ENCODE measurements at regions of chr1 and their contacts with region 1.

Region 1: DNA sequence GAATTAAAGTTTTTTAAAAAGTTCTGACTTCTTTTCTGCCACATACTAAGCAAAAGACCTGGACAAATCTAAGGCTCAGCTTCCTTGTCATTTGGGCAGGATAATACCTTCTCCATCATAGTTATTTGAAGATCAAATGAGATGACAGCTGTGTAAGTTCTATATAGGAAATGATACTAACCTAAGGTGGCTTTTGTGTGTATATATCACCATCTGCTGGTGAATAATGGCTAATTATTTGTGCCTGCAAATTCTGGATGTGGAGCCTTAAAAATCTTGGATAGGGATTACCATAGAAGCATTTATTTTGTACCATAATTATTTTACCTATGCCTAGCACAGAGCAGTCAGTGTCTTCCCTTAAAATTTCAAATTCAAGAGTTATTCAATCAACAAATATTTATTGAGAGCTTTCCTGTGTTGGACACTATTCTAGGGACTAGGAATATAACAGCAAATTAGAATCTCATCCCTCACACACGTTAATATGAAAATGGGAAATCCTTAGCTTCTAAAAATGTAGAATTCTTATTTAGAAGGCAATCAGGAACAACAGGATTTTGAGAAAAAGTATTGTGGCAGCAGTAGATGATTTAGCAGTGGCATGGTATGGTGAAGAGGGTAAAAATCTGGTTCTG is 89.8 kb downstream of the TMEM200B start:
- DNase-seq: no peak
- H3K4me3 ChIP-seq: no peak overlapping the region
- H3K27me3 ChIP-seq: no peaks in the 10 kb centered on the region
- CTCF ChIP-seq: peak; percentile 54

Region 2: GRCh38 chr1:28886731-28887418 is 147.1 kb before region 1 on chr1:
- CTCF ChIA-PET with region 1: interaction called, 369 read pairs
- POLR2A ChIA-PET with region 1: no interaction called
- DNase-seq: no peak
- H3K4me3 ChIP-seq: peak overlapping the region; percentile 82
- H3K27me3 ChIP-seq: no peaks in the 10 kb centered on the region
- CTCF ChIP-seq: no peak

Region 3: GRCh38 chr1:29022620-29023019 is 11.3 kb before region 1 on chr1:
- CTCF ChIA-PET with region 1: interaction called, 35 read pairs
- POLR2A ChIA-PET with region 1: no interaction called
- DNase-seq: no peak
- H3K4me3 ChIP-seq: no peak overlapping the region
- H3K27me3 ChIP-seq: no peaks in the 10 kb centered on the region
- CTCF ChIP-seq: no peak

Region 4: GRCh38 chr1:29050166-29050565 is 16.2 kb after region 1 on chr1:
- CTCF ChIA-PET with region 1: interaction called, 10 read pairs
- POLR2A ChIA-PET with region 1: no interaction called
- DNase-seq: no peak
- H3K4me3 ChIP-seq: no peak overlapping the region
- H3K27me3 ChIP-seq: no peaks in the 10 kb centered on the region
- CTCF ChIP-seq: no peak

Region 5: GRCh38 chr1:29124366-29125236 is 90.7 kb after region 1 on chr1:
- CTCF ChIA-PET with region 1: interaction called, 10 read pairs
- POLR2A ChIA-PET with region 1: no interaction called
- DNase-seq: no peak
- H3K4me3 ChIP-seq: peak overlapping the region; percentile 79
- H3K27me3 ChIP-seq: 0 out of 2 replicates have a peak, but pooled peaks cover 2% of the 10 kb centered on the region
- CTCF ChIP-seq: peak; percentile 69

Region 6: GRCh38 chr1:29197585-29197924 is 163.6 kb after region 1 on chr1:
- CTCF ChIA-PET with region 1: interaction called, 20 read pairs
- POLR2A ChIA-PET with region 1: no interaction called
- DNase-seq: no peak
- H3K4me3 ChIP-seq: no peak overlapping the region
- H3K27me3 ChIP-seq: no peaks in the 10 kb centered on the region
- CTCF ChIP-seq: peak; percentile 60

Region 7: DNA sequence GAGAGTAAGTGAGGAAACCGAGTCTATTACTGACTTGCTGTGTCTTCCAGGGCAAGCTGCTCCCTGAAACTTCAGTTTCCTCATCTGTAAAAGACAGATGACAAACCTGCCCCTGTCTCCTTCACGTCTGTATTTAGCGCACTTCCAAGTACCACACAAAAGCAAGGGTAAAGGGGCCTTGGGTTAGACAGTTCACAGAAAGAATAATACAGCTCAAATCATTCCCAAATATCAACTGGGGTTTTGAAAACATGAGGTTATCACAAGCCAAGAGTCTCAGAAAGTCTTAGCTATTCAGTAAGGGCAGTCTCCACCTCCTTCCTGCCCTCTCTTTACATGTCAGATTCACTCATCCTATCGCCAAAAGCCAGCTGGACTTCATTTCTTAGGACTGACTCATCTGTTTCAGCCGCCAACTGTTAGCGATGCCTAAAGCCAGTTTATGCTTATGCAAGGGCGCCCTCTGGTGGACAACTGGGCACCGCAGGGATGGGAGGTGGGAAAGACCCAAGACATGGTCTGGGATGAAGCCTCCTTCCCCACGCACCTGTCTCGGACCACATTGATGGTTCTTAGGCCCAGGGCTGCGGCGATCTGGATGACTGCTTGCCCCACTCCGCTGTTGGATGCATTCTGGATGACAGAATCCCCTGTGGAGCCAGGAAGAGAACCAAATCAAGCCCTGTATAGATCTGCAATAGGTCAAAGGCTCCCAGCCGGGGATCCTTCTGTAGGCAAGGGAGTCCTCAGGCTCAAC is 168.8 kb after region 1 on chr1:
- CTCF ChIA-PET with region 1: interaction called, 20 read pairs
- POLR2A ChIA-PET with region 1: no interaction called
- DNase-seq: peak; percentile 88
- H3K4me3 ChIP-seq: no peak overlapping the region
- H3K27me3 ChIP-seq: no peaks in the 10 kb centered on the region
- CTCF ChIP-seq: peak; percentile 96